ENCODE measurements at regions of chr4 and their contacts with region 1.

Region 1: DNA sequence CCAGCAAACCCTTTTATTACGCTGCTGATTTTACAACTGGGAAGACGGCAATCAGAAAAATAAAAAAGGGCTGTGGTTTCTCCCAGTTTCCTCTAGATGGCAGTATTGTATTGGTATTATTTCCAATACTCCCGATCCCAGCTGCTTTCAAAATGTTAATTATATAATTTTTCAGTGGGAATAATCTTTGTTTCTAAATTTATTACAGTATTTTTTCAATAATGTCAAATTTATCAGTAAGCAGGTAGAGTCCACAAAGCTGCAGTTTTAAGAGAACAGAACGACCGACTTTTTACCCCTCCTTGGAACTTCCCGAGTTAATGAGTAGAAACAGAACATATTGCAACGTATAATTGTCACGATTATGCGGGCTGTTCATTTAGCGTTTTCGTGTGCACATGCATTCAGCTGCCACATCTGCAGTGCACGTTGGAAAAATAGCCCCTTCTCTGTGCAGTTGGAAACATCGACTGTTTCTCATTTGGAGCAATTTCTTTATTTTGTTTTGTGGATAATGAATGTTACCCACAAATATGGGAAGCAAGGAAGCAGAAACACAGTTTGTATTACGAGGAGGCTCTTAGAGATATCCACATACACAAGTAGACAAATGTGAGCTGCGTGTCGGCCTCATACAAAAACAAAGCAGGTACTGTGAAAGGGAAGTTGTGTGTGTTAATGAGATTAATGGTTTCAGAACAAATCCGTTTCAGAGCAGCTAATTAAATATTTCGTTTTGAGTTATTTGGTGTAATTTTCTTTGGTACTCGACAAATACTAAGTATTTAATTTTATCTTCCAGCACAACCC is 188.0 kb downstream of the STIM2 start:
- DNase-seq: peak; percentile 57
- ATAC-seq: peak; percentile 15; the same call in 1 of the 2 replicates
- H3K4me3 ChIP-seq: peak overlapping the region; percentile 66
- H3K27ac ChIP-seq: no peak overlapping the region
- H3K4me1 ChIP-seq: peaks cover 5% of the 10 kb centered on the region
- H3K27me3 ChIP-seq: no peaks in the 10 kb centered on the region
- CTCF ChIP-seq: peak; percentile 68

Region 2: GRCh38 chr4:27176400-27176799 is 127.8 kb after region 1 on chr4:
- CTCF ChIA-PET with region 1: no interaction called
- POLR2A ChIA-PET with region 1: no interaction called
- intact Hi-C with region 1: loop called (anchors 2 kb)
- DNase-seq: peak; percentile 59
- ATAC-seq: peak; percentile 81
- H3K4me3 ChIP-seq: no peak overlapping the region
- H3K27ac ChIP-seq: no peak overlapping the region
- H3K4me1 ChIP-seq: no peaks in the 10 kb centered on the region
- H3K27me3 ChIP-seq: no peaks in the 10 kb centered on the region
- CTCF ChIP-seq: peak; percentile 77

Region 3: DNA sequence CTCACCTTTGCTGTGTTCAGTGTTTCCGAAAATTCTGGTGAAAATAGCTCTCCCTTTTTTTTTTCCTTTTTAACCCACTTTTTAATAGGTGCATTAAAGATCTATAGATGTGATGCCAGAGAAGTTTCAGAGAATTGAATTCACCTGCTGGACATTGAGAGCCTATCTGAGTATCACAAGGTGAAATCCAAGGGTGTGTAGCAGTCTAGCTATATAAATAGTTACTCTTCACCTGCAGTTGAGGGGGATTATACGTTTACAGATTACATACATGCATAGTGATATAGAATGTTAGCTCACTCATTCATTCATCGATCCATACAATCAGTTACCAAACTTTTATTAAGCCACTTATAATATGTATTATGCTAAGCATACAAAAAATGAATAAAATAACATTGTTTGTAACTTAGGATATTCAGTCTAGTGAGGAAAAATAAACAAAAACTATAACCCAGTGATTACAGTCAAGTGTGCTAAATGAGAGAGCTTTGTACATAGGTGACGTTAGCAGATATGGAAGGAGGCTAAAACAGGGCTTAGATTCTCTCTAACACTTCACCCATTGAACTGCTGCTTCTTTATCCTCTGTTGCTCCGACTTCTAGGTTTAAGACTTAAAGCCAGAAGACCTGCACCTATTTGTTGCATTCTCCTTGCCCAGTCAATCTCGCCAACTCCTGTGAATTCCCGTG is 581.0 kb after region 1 on chr4:
- CTCF ChIA-PET with region 1: no interaction called
- POLR2A ChIA-PET with region 1: no interaction called
- intact Hi-C with region 1: loop called (anchors 5 kb)
- DNase-seq: no peak
- ATAC-seq: no peak
- H3K4me3 ChIP-seq: no peak overlapping the region
- H3K27ac ChIP-seq: no peak overlapping the region
- H3K4me1 ChIP-seq: no peaks in the 10 kb centered on the region
- H3K27me3 ChIP-seq: peaks cover 7% of the 10 kb centered on the region
- CTCF ChIP-seq: no peak